Activated CD4-positive, alpha-beta T cell treated with anti-CD3 and anti-CD28 coated beads, Interleukin-2, amount 10 ng/mL, durations not matched to agents 24 days and 14 days (primary cell): ENCODE measurements at regions of chr7 and their contacts with region 1.

Region 1: DNA sequence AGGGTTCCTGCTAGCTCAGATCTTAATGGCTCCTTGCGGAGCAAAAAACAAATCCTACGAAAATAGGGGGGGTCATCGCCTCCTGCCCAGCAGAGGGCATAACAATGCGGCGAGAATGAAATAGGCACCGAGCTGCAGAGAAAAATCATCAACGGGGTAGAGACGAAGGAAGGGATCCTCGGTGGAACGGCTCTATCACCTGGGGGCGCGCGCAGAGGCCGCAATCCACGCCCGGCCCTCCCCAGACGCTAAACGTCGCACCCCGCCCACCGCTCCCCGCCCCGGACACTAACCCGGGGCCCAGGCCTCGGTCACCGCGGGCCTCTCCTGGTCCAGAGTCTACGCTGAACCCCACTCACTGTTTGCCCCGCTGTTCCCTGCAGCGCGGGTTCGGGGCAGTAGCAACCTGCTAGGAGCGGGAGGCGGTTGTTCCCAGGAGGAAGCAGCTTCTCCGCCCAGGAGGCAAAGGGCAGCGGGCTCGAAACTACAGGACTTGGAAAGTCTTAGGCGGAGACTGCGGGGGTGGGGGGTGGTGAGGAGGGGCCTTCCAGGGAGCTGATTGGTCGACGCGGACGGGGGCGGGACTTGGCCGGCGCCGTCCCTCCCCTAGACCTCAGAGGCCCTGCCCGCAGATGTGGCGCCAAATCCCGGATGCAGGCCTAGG is at the start of gene TCAF1:
- DNase-seq: peak; percentile 95
- H3K4me3 Mint-ChIP-seq: peak within 1 kb of the TSS; percentile 91
- H3K27ac Mint-ChIP-seq: peak within 1 kb of the TSS; percentile 89
- H3K4me1 Mint-ChIP-seq: peaks cover 23% of the 10 kb centered on the region
- H3K27me3 Mint-ChIP-seq: no peaks in the 10 kb centered on the region
- total RNA-seq, gene TCAF1: 12.6 and 13.5 TPM in 2 replicates

Region 2: DNA sequence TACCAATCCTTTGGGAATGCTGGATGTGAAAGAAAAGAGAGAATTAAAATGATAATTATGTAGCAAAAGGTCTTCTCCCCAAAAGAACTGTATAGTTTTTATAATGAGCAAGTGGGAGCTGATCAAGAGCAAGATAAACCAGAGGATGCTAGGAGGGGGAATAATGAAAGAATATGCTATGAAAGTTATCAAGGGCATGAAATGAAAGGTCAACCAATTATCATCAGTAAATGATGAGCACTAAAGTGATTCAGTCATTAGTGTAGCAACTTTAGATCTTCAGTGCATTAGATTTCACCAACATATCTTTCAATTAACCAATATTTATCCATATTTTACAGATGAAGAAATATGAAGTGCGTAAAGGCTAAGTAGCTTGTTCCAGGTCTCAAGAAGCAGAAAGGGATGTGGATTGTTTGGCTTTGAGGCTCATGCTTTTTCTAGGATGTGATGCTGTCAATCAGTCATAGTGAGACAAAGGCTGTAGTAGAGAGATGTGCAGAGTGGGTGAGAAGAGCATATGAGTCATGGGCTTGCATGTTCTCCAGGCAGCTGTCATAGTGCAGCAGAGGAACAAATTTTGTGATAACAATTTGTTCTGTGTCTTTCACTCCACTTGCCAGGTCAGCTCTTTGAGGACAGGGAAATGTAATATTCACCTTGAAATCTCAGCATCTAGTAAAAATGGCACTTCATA is 27.6 kb after region 1 on chr7:
- intact Hi-C with region 1: loop called (anchors 1 kb)
- DNase-seq: peak; percentile 59
- H3K4me3 Mint-ChIP-seq: no peak overlapping the region
- H3K27ac Mint-ChIP-seq: no peak overlapping the region
- H3K4me1 Mint-ChIP-seq: peaks cover 20% of the 10 kb centered on the region
- H3K27me3 Mint-ChIP-seq: peaks cover 16% of the 10 kb centered on the region

Region 3: DNA sequence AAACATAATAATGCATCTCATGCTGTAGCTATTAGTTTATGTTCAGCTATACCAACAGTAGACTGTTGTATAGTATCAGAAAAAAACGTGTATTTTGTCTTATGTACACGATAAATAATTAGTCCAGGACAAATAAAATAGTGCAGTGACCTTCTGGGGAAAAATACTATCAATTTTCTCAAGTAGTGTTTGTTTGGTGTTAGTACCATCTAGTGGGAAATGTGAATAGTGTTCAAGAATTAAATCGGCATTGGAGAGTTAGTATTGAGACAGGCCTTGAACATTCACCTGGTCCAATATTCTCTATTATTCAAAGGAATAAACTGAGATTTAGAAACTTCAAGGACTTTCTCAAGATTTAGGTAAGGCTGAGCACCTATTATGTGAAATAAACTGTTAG is 125.3 kb after region 1 on chr7:
- intact Hi-C with region 1: loop called (anchors 10 kb)
- DNase-seq: no peak
- H3K4me3 Mint-ChIP-seq: no peak overlapping the region
- H3K27ac Mint-ChIP-seq: no peak overlapping the region
- H3K4me1 Mint-ChIP-seq: peaks cover 2% of the 10 kb centered on the region
- H3K27me3 Mint-ChIP-seq: peaks cover 6% of the 10 kb centered on the region